ENCODE measurements at regions of chr12 and their contacts with region 1.

Region 1: GRCh38 chr12:122190842-122191668 is 8.1 kb downstream of the LRRC43 start:
- DNase-seq: peak; percentile 87
- ATAC-seq: peak; percentile 90
- H3K4me3 Mint-ChIP-seq: no peak overlapping the region
- H3K27ac Mint-ChIP-seq: no peak overlapping the region
- H3K4me1 Mint-ChIP-seq: peaks cover 3% of the 10 kb centered on the region
- H3K27me3 Mint-ChIP-seq: peaks cover 16% of the 10 kb centered on the region

Region 2: GRCh38 chr12:122130150-122130549 is 60.9 kb before region 1 on chr12:
- CTCF ChIA-PET with region 1: interaction called, 41 read pairs
- DNase-seq: no peak
- ATAC-seq: no peak
- H3K4me3 Mint-ChIP-seq: no peak overlapping the region
- H3K27ac Mint-ChIP-seq: no peak overlapping the region
- H3K4me1 Mint-ChIP-seq: peaks cover 8% of the 10 kb centered on the region
- H3K27me3 Mint-ChIP-seq: no peaks in the 10 kb centered on the region

Region 3: DNA sequence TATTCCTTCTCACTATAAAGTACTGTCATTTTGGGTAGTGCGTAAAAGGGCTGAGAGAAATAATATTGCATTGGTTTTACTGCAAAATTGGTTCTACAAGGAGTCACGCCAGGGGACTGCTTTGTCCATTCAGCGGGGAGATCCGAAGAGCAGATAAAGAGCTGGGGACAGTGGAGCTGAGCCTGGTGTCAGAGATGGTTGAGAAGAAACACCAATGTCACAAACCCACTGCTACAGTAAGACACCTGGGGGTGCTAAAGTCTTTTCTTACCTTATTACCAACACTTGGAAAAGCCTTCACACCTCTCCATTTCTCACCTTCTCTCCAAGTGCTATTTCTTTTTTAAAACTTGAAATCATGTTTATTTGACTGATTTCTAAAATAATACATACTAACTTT is 31.2 kb before region 1 on chr12:
- CTCF ChIA-PET with region 1: interaction called, 31 read pairs
- DNase-seq: no peak
- ATAC-seq: peak; percentile 52
- H3K4me3 Mint-ChIP-seq: no peak overlapping the region
- H3K27ac Mint-ChIP-seq: no peak overlapping the region
- H3K4me1 Mint-ChIP-seq: peaks cover 26% of the 10 kb centered on the region
- H3K27me3 Mint-ChIP-seq: peaks cover 33% of the 10 kb centered on the region

Region 4: DNA sequence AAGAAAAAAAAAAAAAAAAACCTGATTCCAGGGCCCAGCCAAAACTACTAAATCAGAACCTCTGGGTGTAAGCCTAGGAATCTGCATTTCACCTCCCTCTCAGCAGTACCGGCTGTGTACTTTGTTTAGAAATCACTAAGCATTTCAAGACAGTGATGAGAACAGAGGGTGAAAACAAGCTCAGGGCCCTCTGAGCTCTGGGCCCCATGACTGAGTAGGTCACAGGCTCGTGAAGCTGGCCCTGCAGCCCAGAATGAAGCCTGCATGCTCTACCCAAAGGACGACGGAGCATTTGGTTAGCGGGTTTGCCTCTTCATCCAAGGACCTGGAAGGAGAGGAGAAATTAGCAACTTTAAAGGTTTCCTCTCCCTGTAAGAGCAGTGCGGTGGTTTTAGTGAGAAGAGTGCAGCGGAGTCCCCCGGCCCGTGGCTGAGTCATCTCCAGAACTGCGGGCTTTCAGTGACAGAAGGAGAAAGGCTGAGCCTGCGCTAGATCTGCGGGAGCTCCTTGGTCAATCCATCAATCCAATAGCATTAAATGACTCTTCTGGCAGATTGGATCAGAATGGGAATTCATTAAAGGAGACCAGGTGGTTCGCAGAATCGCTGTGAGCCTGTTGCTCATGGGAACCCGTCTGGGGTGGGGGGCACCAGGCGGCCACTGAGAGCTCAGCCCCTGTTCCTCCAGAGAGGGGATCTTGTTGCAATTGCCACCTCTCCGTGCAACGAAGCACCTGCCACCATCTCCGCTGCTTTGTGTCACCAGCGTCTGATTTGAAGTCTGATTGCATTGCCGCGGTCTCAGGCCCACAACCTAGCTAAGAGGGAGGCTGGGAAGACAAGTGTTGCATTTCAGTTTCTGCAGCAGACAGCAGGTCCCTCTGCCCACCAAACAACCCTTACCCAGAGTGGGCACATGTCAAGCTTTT is 24.4 kb before region 1 on chr12:
- CTCF ChIA-PET with region 1: interaction called, 25 read pairs
- DNase-seq: peak; percentile 91
- ATAC-seq: peak; percentile 93
- H3K4me3 Mint-ChIP-seq: peak overlapping the region; percentile 38
- H3K27ac Mint-ChIP-seq: peak overlapping the region; percentile 79
- H3K4me1 Mint-ChIP-seq: peaks cover 41% of the 10 kb centered on the region
- H3K27me3 Mint-ChIP-seq: peaks cover 30% of the 10 kb centered on the region

Region 5: DNA sequence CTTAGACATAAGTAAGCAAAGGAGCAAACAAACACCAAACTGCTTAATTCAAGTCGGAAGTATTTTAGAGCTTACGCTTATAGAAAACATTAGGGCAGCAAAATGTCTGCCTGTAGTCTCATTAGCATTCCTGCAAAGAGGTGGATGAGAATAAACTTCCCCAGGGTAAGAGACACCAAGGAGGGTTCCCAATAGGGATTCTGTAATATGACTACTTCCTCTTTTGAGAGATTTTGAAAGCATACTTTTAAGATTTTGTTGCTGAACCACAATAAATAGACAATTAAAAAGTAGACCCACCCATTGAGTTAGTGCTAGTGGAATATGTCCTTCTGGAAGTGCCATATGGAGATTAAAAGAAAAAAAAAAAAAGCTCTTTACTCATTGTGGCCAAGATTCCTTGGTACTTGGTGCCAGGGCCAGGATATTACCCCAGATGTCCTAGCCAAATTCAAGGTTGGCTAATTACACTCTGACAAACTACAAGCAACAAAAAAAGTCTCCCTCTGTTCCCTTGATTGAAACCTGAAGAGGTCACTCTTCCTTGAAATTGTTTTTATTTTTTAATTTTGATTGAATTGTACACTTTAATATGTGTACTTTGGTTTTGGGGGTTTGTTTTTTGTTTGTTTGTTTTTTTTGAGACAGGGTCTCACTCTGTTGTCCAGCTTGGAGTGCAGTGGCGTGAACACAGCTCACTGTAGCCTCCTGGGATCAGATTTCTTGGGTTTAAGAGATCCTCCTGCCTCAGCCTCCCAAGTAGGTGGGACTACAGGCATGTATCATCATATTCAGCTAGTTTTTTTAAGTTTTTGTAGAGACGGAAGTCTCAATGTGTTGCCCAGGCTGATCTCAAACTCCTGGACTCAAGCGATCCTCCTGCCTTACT is 222.7 kb after region 1 on chr12:
- CTCF ChIA-PET with region 1: no interaction called
- DNase-seq: no peak
- ATAC-seq: no peak
- H3K4me3 Mint-ChIP-seq: no peak overlapping the region
- H3K27ac Mint-ChIP-seq: peak overlapping the region; percentile 94
- H3K4me1 Mint-ChIP-seq: peaks cover 34% of the 10 kb centered on the region
- H3K27me3 Mint-ChIP-seq: no peaks in the 10 kb centered on the region